ENCODE measurements at regions of chr3 and their contacts with region 1.

Region 1: GRCh38 chr3:71332813-71333212 is 250.7 kb downstream of the FOXP1 start:
- DNase-seq: no peak
- ATAC-seq: no peak
- H3K4me3 ChIP-seq: no peak overlapping the region
- H3K4me3 Mint-ChIP-seq: peak overlapping the region in 2 of 10 donors; percentile 17 to 42
- H3K27ac ChIP-seq: no peak overlapping the region
- H3K27ac Mint-ChIP-seq: peak overlapping the region in 7 of 9 donors; percentile 10 to 88 (median 76)
- H3K4me1 ChIP-seq: peaks cover 0 to 5% of the 10 kb centered on the region in 2 donors
- H3K4me1 Mint-ChIP-seq: peaks cover 0 to 69% (median 64%) of the 10 kb centered on the region in 7 donors
- H3K27me3 ChIP-seq: no peaks in the 10 kb centered on the region
- H3K27me3 Mint-ChIP-seq: no peaks in the 10 kb centered on the region

Region 2: GRCh38 chr3:71028802-71029201 is 304.0 kb before region 1 on chr3:
- CTCF ChIA-PET with region 1: no interaction called
- POLR2A ChIA-PET with region 1: no interaction called
- intact Hi-C with region 1: no loop called
- DNase-seq: no peak
- ATAC-seq: no peak
- H3K4me3 ChIP-seq: no peak overlapping the region
- H3K4me3 Mint-ChIP-seq: peak overlapping the region in 1 of 10 donors; percentile 45
- H3K27ac ChIP-seq: no peak overlapping the region
- H3K27ac Mint-ChIP-seq: peak overlapping the region in 7 of 9 donors; percentile 32 to 87 (median 58)
- H3K4me1 ChIP-seq: peaks cover 3 to 49% of the 10 kb centered on the region in 2 donors
- H3K4me1 Mint-ChIP-seq: peaks cover 43 to 99% (median 96%) of the 10 kb centered on the region in 7 donors
- H3K27me3 ChIP-seq: no peaks in the 10 kb centered on the region
- H3K27me3 Mint-ChIP-seq: no peaks in the 10 kb centered on the region

Region 3: DNA sequence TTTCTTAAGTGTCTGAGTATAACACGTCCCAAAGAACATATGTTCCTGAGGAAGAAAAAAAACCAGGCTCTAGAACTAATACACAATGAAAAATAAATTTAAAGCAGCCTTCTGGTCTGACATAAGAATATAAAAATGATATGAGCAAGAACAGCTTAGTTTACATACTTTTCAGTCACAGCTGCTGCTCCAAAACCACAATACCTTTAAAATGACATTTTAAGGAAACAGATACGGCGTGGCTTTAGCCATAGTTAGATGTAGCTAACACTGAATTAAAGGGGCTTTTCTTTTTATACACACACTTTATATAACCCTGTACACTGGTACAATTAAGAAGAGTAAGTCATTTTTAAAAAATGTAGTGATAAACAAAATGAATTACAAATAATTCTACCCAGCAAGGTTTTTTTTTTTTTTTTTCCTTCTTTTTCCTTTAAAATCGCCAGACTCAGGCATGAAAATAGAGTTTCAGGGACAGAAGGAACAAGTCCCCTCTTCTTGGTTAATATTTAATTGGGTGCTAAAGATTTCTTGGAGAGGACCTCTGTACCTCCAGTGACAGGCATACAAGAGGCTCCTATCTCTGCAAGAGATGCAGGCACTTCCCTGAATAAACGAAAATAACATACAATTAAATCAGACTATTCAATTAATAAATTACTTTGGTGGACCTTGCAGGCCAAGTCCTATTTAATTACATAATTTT is 14.9 kb before region 1 on chr3:
- CTCF ChIA-PET with region 1: interaction called, 3 read pairs
- POLR2A ChIA-PET with region 1: no interaction called
- intact Hi-C with region 1: loop called in 1 of 2 experiments (anchors 2 kb)
- DNase-seq: no peak
- ATAC-seq: no peak
- H3K4me3 ChIP-seq: no peak overlapping the region
- H3K4me3 Mint-ChIP-seq: peak overlapping the region in 7 of 10 donors; percentile 43 to 74 (median 47)
- H3K27ac ChIP-seq: peak overlapping the region; percentile 46
- H3K27ac Mint-ChIP-seq: peak overlapping the region in 5 of 9 donors; percentile 40 to 94 (median 70)
- H3K4me1 ChIP-seq: peaks cover 0 to 39% of the 10 kb centered on the region in 2 donors
- H3K4me1 Mint-ChIP-seq: peaks cover 3 to 43% (median 34%) of the 10 kb centered on the region in 7 donors
- H3K27me3 ChIP-seq: no peaks in the 10 kb centered on the region
- H3K27me3 Mint-ChIP-seq: peaks cover 0 to 3% (median 0%) of the 10 kb centered on the region in 5 donors